ENCODE measurements at regions of chr10 and their contacts with region 1.

Region 1: GRCh38 chr10:19819419-19820033 is 3.3 kb downstream of the PLXDC2 start:
- DNase-seq: peak; percentile 89
- H3K4me3 Mint-ChIP-seq: no peak overlapping the region
- H3K27ac Mint-ChIP-seq: peak overlapping the region; percentile 6
- H3K4me1 Mint-ChIP-seq: peaks cover 30% of the 10 kb centered on the region
- H3K27me3 Mint-ChIP-seq: no peaks in the 10 kb centered on the region
- CTCF ChIP-seq: peak; percentile 69

Region 2: DNA sequence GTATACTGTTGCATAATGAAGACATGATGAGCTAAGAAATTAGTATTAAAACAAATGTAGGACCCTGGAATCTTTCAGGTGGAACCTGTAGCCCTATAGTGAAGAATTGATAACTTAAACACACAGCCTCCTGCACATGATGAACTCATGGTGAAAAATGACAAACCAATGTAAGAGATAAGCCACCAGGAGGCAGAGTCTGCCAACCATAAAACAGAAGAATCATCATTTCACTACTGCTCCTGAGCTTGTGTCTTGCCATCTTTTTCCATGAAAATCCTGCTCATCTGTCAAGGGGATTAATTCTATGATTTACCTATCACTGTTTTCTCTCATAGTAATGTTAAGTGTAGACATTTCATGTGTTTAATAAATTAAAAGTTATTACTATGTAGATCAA is 407.0 kb before region 1 on chr10:
- CTCF ChIA-PET with region 1: interaction called, 5 read pairs
- POLR2A ChIA-PET with region 1: no interaction called
- intact Hi-C with region 1: loop called (anchors 1 kb)
- DNase-seq: peak; percentile 57
- H3K4me3 Mint-ChIP-seq: no peak overlapping the region
- H3K27ac Mint-ChIP-seq: no peak overlapping the region
- H3K4me1 Mint-ChIP-seq: no peaks in the 10 kb centered on the region
- H3K27me3 Mint-ChIP-seq: no peaks in the 10 kb centered on the region
- CTCF ChIP-seq: peak; percentile 42

Region 3: GRCh38 chr10:19922236-19922963 is 102.9 kb after region 1 on chr10:
- CTCF ChIA-PET with region 1: interaction called, 6 read pairs
- POLR2A ChIA-PET with region 1: interaction called, 32 read pairs
- intact Hi-C with region 1: no loop called
- DNase-seq: peak; percentile 85
- H3K4me3 Mint-ChIP-seq: peak overlapping the region; percentile 56
- H3K27ac Mint-ChIP-seq: peak overlapping the region; percentile 83
- H3K4me1 Mint-ChIP-seq: peaks cover 60% of the 10 kb centered on the region
- H3K27me3 Mint-ChIP-seq: no peaks in the 10 kb centered on the region
- CTCF ChIP-seq: no peak

Region 4: GRCh38 chr10:20085115-20085514 is 265.6 kb after region 1 on chr10:
- CTCF ChIA-PET with region 1: no interaction called
- POLR2A ChIA-PET with region 1: no interaction called
- intact Hi-C with region 1: loop called (anchors 10 kb)
- DNase-seq: no peak
- H3K4me3 Mint-ChIP-seq: no peak overlapping the region
- H3K27ac Mint-ChIP-seq: no peak overlapping the region
- H3K4me1 Mint-ChIP-seq: no peaks in the 10 kb centered on the region
- H3K27me3 Mint-ChIP-seq: no peaks in the 10 kb centered on the region
- CTCF ChIP-seq: no peak

Region 5: DNA sequence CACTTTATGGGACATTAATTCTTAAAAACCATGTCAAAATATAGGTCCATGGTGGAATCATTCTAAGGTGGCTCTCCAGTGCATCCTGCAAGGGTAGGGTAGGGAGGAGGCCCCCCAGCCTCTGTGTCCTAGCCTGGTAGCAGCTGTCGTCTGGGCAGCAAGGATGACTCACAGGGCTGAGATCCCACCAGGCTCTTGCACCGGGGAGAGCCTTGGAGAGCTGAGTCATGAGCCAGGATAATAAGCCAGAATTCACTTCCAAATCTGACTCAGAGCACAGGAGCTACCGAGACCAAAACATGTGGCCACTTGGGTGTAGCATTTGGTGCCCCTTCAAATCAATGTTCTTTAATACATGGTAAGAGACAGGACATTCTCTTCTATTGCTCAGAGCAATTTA is 779.1 kb after region 1 on chr10:
- CTCF ChIA-PET with region 1: no interaction called
- POLR2A ChIA-PET with region 1: no interaction called
- intact Hi-C with region 1: loop called (anchors 10 kb)
- DNase-seq: peak; percentile 90
- H3K4me3 Mint-ChIP-seq: no peak overlapping the region
- H3K27ac Mint-ChIP-seq: no peak overlapping the region
- H3K4me1 Mint-ChIP-seq: peaks cover 23% of the 10 kb centered on the region
- H3K27me3 Mint-ChIP-seq: no peaks in the 10 kb centered on the region
- CTCF ChIP-seq: no peak

Region 6: DNA sequence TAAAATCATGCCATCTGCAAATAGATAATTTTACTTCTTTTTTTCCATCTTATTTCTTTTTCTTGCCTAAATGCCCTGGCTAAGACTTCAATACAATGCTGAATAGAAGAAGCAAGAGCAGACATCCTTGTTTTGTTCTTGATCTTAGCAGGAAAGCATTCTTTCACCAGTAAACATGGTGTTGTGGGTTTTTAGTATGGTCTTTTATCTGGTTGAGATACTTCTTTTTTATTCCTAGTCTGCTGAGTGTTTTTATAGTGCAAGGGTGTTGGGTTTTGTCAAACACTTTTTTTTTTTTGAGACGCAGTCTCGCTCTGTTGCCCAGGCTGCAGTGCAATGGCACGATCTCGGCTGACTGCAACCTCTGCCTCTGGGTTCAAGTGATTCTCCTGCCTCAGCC is 1951.7 kb after region 1 on chr10:
- CTCF ChIA-PET with region 1: no interaction called
- POLR2A ChIA-PET with region 1: no interaction called
- intact Hi-C with region 1: no loop called
- DNase-seq: no peak
- H3K4me3 Mint-ChIP-seq: no peak overlapping the region
- H3K27ac Mint-ChIP-seq: no peak overlapping the region
- H3K4me1 Mint-ChIP-seq: no peaks in the 10 kb centered on the region
- H3K27me3 Mint-ChIP-seq: no peaks in the 10 kb centered on the region
- CTCF ChIP-seq: no peak